ENCODE measurements at regions of chr3 and their contacts with region 1.

Region 1: GRCh38 chr3:15268033-15268631 is 62.1 kb downstream of the CAPN7 start:
- DNase-seq: no peak
- H3K4me3 ChIP-seq: no peak overlapping the region
- H3K27me3 ChIP-seq: no peaks in the 10 kb centered on the region
- CTCF ChIP-seq: peak; percentile 97

Region 2: DNA sequence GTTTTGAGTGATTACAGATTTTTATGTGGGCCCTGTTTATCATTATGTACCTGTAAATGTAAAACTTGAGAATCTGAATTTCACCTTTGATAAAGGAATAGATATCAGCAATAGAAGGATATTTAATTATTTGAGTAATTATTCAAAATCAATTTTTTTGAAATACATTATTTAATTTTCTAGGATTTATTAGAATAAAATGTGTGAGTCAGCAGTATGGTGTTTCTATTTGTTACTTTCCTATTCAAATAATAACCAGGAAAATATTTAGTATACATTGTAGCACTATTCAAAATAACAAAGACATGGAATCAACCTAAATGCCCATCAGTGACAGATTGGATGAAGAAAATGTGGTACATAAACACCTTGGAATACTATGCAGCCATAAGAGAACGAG is 40.0 kb before region 1 on chr3:
- CTCF ChIA-PET with region 1: no interaction called
- POLR2A ChIA-PET with region 1: no interaction called
- DNase-seq: no peak
- H3K4me3 ChIP-seq: no peak overlapping the region
- H3K27me3 ChIP-seq: no peaks in the 10 kb centered on the region
- CTCF ChIP-seq: no peak

Region 3: GRCh38 chr3:15256861-15257341 is 11.2 kb before region 1 on chr3:
- CTCF ChIA-PET with region 1: interaction called, 13 read pairs
- POLR2A ChIA-PET with region 1: no interaction called
- DNase-seq: no peak
- H3K4me3 ChIP-seq: no peak overlapping the region
- H3K27me3 ChIP-seq: no peaks in the 10 kb centered on the region
- CTCF ChIP-seq: no peak

Region 4: GRCh38 chr3:15287565-15288330 is 19.6 kb after region 1 on chr3:
- CTCF ChIA-PET with region 1: interaction called, 38 read pairs
- POLR2A ChIA-PET with region 1: no interaction called
- DNase-seq: peak; percentile 68
- H3K4me3 ChIP-seq: no peak overlapping the region
- H3K27me3 ChIP-seq: no peaks in the 10 kb centered on the region
- CTCF ChIP-seq: no peak

Region 5: DNA sequence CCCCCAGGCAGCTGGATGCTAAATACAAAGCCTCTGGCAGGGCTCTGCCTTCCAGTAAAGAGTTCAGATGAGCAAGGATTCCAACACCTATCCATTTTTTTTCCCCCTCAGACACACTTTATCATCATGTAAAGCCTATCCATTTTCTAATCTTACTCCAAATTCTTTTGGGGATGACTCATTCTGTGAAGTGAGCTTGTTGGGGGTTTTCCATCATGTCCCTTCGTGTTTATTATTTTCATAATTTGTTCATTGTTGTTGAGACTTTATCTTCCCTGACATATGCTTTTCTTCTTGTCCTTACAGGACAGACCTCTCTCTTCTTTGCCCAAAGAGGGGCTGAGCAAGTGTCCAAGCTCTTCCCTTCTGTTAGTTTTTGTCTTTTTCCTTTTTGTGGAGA is 98.9 kb after region 1 on chr3:
- CTCF ChIA-PET with region 1: interaction called, 18 read pairs
- POLR2A ChIA-PET with region 1: no interaction called
- DNase-seq: no peak
- H3K4me3 ChIP-seq: no peak overlapping the region
- H3K27me3 ChIP-seq: no peaks in the 10 kb centered on the region
- CTCF ChIP-seq: no peak

Region 6: GRCh38 chr3:15384510-15385237 is 116.5 kb after region 1 on chr3:
- CTCF ChIA-PET with region 1: interaction called, 112 read pairs
- POLR2A ChIA-PET with region 1: interaction called, 3 read pairs
- DNase-seq: no peak
- H3K4me3 ChIP-seq: no peak overlapping the region
- H3K27me3 ChIP-seq: no peaks in the 10 kb centered on the region
- CTCF ChIP-seq: no peak

Region 7: GRCh38 chr3:15405448-15406050 is 137.4 kb after region 1 on chr3:
- CTCF ChIA-PET with region 1: interaction called, 75 read pairs
- POLR2A ChIA-PET with region 1: no interaction called
- DNase-seq: no peak
- H3K4me3 ChIP-seq: no peak overlapping the region
- H3K27me3 ChIP-seq: no peaks in the 10 kb centered on the region
- CTCF ChIP-seq: peak; percentile 58

Measured in BJ (cell line).